ENCODE measurements at regions of chr1 and their contacts with region 1.

Region 1: DNA sequence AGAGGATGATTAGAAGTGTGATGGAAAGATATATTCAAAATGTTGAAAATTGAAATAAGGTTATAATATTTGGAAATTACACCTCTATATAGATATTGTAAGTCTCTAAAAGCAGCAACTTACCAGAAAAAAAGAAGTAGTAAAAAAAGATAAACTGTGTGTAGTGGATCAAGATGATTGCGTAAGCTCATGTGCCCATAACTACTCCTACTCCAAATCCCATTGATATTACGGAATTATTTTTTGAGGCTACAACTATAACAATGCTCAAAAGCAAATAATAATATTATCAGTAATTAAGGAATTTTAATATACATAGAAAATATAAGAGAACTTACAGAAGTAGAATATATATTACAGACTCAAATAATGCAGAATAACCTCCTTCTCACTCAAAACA is 33.6 kb downstream of the CATSPERE start:
- DNase-seq: no peak
- H3K4me3 ChIP-seq: no peak overlapping the region
- H3K27ac ChIP-seq: no peak overlapping the region
- H3K4me1 ChIP-seq: no peaks in the 10 kb centered on the region
- H3K27me3 ChIP-seq: no peaks in the 10 kb centered on the region
- CTCF ChIP-seq: no peak
- POLR2A ChIP-seq: no peak

Region 2: DNA sequence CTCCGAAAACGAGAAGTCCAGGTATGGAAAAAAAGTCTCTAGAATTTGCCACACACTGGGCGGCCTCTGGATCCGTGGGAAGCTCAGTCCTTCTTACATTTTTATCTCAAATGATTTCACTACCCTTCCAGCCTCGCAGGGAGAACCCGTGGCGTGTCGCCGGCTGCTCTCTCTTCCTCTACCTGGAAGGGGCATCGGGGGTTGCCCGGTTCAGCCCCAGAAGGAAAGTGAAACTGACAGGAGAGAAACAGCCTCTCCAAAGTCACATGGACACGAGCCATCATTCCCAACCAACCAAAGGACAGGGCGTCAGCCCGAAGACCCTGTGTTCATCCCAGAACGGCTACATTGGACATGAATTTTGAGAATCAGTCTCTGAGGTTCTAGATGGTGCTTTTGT is 225.5 kb before region 1 on chr1:
- intact Hi-C with region 1: no loop called
- DNase-seq: peak in 1 of 7 donors; percentile 43
- H3K4me3 ChIP-seq: no peak overlapping the region
- H3K27ac ChIP-seq: no peak overlapping the region
- H3K4me1 ChIP-seq: peaks cover 6 to 9% of the 10 kb centered on the region in 2 donors
- H3K27me3 ChIP-seq: no peaks in the 10 kb centered on the region
- CTCF ChIP-seq: no peak
- POLR2A ChIP-seq: no peak

Region 3: GRCh38 chr1:244576259-244576892 is 81.7 kb after region 1 on chr1:
- intact Hi-C with region 1: loop called in 1 of 2 experiments (anchors 10 kb)
- DNase-seq: no peak
- H3K4me3 ChIP-seq: no peak overlapping the region
- H3K27ac ChIP-seq: no peak overlapping the region
- H3K4me1 ChIP-seq: no peaks in the 10 kb centered on the region
- H3K27me3 ChIP-seq: no peaks in the 10 kb centered on the region
- CTCF ChIP-seq: no peak
- POLR2A ChIP-seq: no peak

Measured in adrenal gland (tissue), 19 donors.